Naive thymus-derived CD4-positive, alpha-beta T cell (primary cell): ENCODE measurements at regions of chr3 and their contacts with region 1.

Region 1: GRCh38 chr3:119240591-119241434 is at the start of gene B4GALT4:
- DNase-seq: peak; percentile 59 to 79 (median 63)
- ATAC-seq: peak; percentile 78
- H3K4me3 ChIP-seq: peak within 1 kb of the TSS; percentile 71
- H3K4me3 Mint-ChIP-seq: peak within 1 kb of the TSS; percentile 90 to 99 (median 94)
- H3K27ac ChIP-seq: peak within 1 kb of the TSS; percentile 90
- H3K27ac Mint-ChIP-seq: peak within 1 kb of the TSS; percentile 83 to 96 (median 91)
- H3K4me1 ChIP-seq: peaks cover 23 to 27% of the 10 kb centered on the region in 2 donors
- H3K4me1 Mint-ChIP-seq: peaks cover 24 to 45% (median 36%) of the 10 kb centered on the region in 7 donors
- H3K27me3 ChIP-seq: no peaks in the 10 kb centered on the region
- H3K27me3 Mint-ChIP-seq: no peaks in the 10 kb centered on the region
- total RNA-seq, gene B4GALT4: 18.0 to 39.8 (median 31.9) TPM

Region 2: DNA sequence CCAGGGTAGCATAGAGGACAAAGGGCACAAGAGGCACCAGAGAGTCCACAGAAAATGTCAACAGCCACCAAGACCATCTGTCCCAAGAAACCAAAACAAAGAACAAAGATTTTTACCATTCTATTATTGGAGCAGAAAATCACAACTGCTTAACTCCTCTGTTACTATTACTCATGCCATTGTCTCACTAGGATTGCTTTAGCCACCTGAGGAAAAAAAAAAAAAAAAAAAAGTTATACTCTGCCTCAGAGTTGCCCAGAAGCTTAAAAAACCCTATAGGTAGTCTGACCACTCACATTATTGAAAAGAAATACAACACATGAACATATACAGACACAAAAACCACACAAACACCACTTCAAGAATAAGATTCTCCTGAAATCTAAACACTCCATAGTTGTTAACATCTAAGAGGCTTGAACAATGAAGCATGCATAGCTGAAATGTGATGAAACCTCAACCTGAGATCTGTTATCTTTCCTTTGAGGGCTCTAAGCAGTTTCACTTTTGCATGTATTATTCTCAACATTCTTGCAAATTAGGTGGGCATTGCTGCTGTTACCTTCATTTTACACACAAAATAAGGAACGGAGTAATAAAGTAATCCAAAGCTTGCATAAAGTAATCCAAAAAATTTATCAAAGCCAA is 291.6 kb before region 1 on chr3:
- CTCF ChIA-PET with region 1: no interaction called
- POLR2A ChIA-PET with region 1: no interaction called
- intact Hi-C with region 1: loop called (anchors 2 to 10 kb)
- DNase-seq: peak in 7 of 9 donors; percentile 19 to 54 (median 40)
- ATAC-seq: peak; percentile 85
- H3K4me3 ChIP-seq: no peak overlapping the region
- H3K4me3 Mint-ChIP-seq: peak overlapping the region; percentile 31 to 91 (median 74)
- H3K27ac ChIP-seq: no peak overlapping the region
- H3K27ac Mint-ChIP-seq: peak overlapping the region; percentile 61 to 91 (median 83)
- H3K4me1 ChIP-seq: peaks cover 6 to 31% of the 10 kb centered on the region in 2 donors
- H3K4me1 Mint-ChIP-seq: peaks cover 19 to 78% (median 63%) of the 10 kb centered on the region in 7 donors
- H3K27me3 ChIP-seq: no peaks in the 10 kb centered on the region
- H3K27me3 Mint-ChIP-seq: peaks cover 0 to 13% (median 0%) of the 10 kb centered on the region in 5 donors

Region 3: GRCh38 chr3:119145500-119146191 is 95.2 kb before region 1 on chr3 and contains the start of gene TEX55:
- CTCF ChIA-PET with region 1: interaction called, 73 read pairs
- POLR2A ChIA-PET with region 1: interaction called, 6 read pairs
- intact Hi-C with region 1: loop called (anchors 1 kb)
- DNase-seq: peak in 7 of 9 donors; percentile 19 to 48 (median 34)
- ATAC-seq: peak; percentile 57
- H3K4me3 ChIP-seq: no peak within 1 kb of the TSS
- H3K4me3 Mint-ChIP-seq: no peak within 1 kb of the TSS
- H3K27ac ChIP-seq: no peak within 1 kb of the TSS
- H3K27ac Mint-ChIP-seq: peak within 1 kb of the TSS in 2 of 9 donors; percentile 9 to 12
- H3K4me1 ChIP-seq: no peaks in the 10 kb centered on the region
- H3K4me1 Mint-ChIP-seq: peaks cover 0 to 8% (median 5%) of the 10 kb centered on the region in 7 donors
- H3K27me3 ChIP-seq: no peaks in the 10 kb centered on the region
- H3K27me3 Mint-ChIP-seq: no peaks in the 10 kb centered on the region
- total RNA-seq, gene TEX55: not detected

Region 4: DNA sequence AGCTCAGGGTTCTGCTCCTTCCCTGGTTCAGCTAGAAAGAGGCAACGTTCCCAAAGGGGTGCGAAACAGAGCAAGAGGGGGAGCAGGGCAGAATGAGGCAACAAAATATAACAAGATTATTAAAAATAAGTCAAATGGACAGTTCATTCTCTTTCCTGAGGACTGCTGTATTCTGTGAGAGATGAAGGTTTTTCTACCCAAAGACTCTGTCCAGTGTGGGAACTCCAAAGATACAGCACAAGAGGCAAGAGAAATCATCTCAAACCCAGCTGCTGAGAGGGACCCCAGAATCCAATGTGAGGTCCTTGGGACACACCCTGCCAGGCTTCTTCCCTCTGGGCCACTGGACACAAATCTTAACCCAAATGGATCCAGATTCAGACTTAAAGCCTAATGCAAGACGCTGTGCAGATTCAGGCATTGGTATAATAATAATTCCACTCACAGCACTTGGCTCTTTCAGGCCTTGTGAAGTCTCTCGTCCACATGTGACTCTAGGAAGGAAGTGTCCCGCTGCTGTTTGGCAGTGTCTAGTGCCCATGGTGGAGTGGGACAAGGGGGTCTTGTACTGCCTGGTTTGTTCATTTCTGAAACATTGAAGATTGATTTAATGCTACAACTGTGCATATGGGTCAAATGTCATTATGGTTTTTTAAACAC is 38.9 kb after region 1 on chr3:
- CTCF ChIA-PET with region 1: no interaction called
- POLR2A ChIA-PET with region 1: no interaction called
- intact Hi-C with region 1: no loop called
- DNase-seq: no peak
- ATAC-seq: no peak
- H3K4me3 ChIP-seq: no peak overlapping the region
- H3K4me3 Mint-ChIP-seq: no peak overlapping the region
- H3K27ac ChIP-seq: no peak overlapping the region
- H3K27ac Mint-ChIP-seq: no peak overlapping the region
- H3K4me1 ChIP-seq: peaks cover 0 to 7% of the 10 kb centered on the region in 2 donors
- H3K4me1 Mint-ChIP-seq: peaks cover 0 to 20% (median 11%) of the 10 kb centered on the region in 7 donors
- H3K27me3 ChIP-seq: no peaks in the 10 kb centered on the region
- H3K27me3 Mint-ChIP-seq: peaks cover 0 to 1% (median 0%) of the 10 kb centered on the region in 5 donors

Region 5: DNA sequence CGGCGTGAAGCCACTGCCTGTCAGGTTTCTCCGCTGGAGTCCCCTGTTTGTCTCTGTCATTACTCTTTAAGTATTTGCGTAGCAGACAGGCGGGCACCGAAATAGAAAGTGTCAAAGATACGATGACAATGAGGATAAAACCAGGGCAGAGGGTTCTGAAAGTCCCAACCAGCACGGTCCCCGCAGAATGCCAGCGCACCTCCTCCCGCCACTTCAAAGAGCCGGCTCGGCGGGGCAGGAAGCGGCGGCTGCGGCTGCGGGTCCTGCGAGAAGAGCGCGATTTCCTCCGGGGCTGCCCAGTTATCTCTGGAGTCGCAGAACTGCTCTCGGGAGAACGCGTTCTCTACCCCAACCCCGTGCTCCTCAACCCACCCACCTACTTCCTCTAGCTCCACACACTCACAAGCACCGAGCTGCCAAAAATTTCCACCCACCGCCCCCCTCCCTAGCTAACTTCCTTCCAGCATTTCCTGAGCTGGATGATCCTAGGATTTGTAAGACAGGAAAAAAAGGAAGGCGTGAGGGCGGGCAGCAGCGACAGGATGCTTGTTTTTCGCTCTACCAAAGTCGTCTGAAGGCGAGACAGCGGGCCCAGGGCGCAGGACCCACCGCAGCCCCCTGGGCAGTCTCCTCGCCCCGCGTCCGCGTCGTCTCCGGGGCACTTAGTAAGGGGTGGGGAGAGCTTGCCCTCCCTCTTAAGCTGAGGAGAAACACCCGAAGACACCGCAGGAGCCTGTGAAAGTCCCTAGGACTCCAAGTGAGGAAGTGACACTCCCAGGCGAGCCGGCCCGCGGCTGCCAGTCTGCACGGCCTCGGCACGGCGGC is 53.3 kb after region 1 on chr3 and contains the start of gene ARHGAP31:
- CTCF ChIA-PET with region 1: interaction called, 9 read pairs
- POLR2A ChIA-PET with region 1: interaction called, 9 read pairs
- intact Hi-C with region 1: loop called (anchors 1 kb)
- DNase-seq: peak; percentile 70 to 91 (median 86)
- ATAC-seq: peak; percentile 77
- H3K4me3 ChIP-seq: peak within 1 kb of the TSS; percentile 50
- H3K4me3 Mint-ChIP-seq: peak within 1 kb of the TSS; percentile 68 to 95 (median 90)
- H3K27ac ChIP-seq: peak within 1 kb of the TSS; percentile 91
- H3K27ac Mint-ChIP-seq: peak within 1 kb of the TSS; percentile 71 to 99 (median 92)
- H3K4me1 ChIP-seq: peaks cover 22 to 26% of the 10 kb centered on the region in 2 donors
- H3K4me1 Mint-ChIP-seq: peaks cover 26 to 74% (median 63%) of the 10 kb centered on the region in 7 donors
- H3K27me3 ChIP-seq: no peaks in the 10 kb centered on the region
- H3K27me3 Mint-ChIP-seq: peaks cover 0 to 43% (median 0%) of the 10 kb centered on the region in 5 donors
- total RNA-seq, gene ARHGAP31: 3.0 to 11.9 (median 3.1) TPM

Region 6: GRCh38 chr3:119469381-119470189 is 228.8 kb after region 1 on chr3:
- CTCF ChIA-PET with region 1: interaction called, 4 read pairs
- POLR2A ChIA-PET with region 1: interaction called, 3 read pairs
- intact Hi-C with region 1: loop called in 1 of 2 experiments (anchors 1 kb)
- DNase-seq: peak in 7 of 9 donors; percentile 10 to 32 (median 24)
- ATAC-seq: peak; percentile 48
- H3K4me3 ChIP-seq: peak overlapping the region; percentile 86
- H3K4me3 Mint-ChIP-seq: peak overlapping the region; percentile 90 to 97 (median 94)
- H3K27ac ChIP-seq: peak overlapping the region; percentile 88
- H3K27ac Mint-ChIP-seq: peak overlapping the region; percentile 83 to 95 (median 89)
- H3K4me1 ChIP-seq: peaks cover 12% of the 10 kb centered on the region in 2 donors
- H3K4me1 Mint-ChIP-seq: peaks cover 27 to 35% (median 30%) of the 10 kb centered on the region in 7 donors
- H3K27me3 ChIP-seq: no peaks in the 10 kb centered on the region
- H3K27me3 Mint-ChIP-seq: no peaks in the 10 kb centered on the region

Region 7: DNA sequence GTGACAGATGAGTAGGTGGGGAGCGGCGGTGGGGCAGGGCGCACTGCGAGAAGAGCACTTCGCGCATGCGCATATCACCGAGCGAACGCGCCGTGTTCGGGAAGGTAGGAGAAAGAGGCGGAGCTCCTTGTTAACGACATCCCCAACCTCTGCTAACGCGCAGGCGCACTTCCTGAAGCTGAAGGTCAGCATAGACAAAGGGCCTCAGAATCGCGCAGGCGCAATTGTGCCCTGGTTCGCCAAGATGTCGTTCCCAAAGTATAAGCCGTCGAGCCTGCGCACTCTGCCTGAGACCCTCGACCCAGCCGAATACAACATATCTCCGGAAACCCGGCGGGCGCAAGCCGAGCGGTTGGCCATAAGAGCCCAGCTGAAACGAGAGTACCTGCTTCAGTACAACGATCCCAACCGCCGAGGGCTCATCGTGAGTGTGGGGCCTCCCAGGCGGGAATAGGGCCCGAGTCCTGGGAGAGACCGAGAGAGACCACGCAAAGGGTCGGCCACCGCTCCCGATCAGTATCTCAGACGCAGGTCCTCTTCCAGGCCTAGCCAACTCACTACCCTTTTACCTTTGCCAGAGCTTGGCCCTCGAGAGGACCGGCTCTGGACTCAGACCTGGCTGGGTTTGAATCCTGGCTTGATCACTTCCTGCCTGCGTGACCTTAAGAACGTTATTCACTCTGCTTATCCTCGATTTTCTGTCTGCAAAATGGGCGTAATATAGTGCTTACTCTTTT is 1355.5 kb after region 1 on chr3 and contains the start of gene NDUFB4:
- CTCF ChIA-PET with region 1: no interaction called
- POLR2A ChIA-PET with region 1: no interaction called
- intact Hi-C with region 1: loop called in 1 of 2 experiments (anchors 10 kb)
- DNase-seq: peak; percentile 84 to 97 (median 93)
- ATAC-seq: peak; percentile 97
- H3K4me3 ChIP-seq: peak within 1 kb of the TSS; percentile 99
- H3K4me3 Mint-ChIP-seq: peak within 1 kb of the TSS in 8 of 10 donors; percentile 85 to 99 (median 96)
- H3K27ac ChIP-seq: peak within 1 kb of the TSS; percentile 92
- H3K27ac Mint-ChIP-seq: peak within 1 kb of the TSS in 5 of 9 donors; percentile 94 to 99 (median 98)
- H3K4me1 ChIP-seq: peaks cover 25 to 27% of the 10 kb centered on the region in 2 donors
- H3K4me1 Mint-ChIP-seq: peaks cover 0 to 20% (median 11%) of the 10 kb centered on the region in 7 donors
- H3K27me3 ChIP-seq: no peaks in the 10 kb centered on the region
- H3K27me3 Mint-ChIP-seq: peaks cover 0 to 20% (median 0%) of the 10 kb centered on the region in 5 donors
- total RNA-seq, gene NDUFB4: 63.4 to 126 (median 76.2) TPM